CD4-positive, alpha-beta memory T cell (primary cell): ENCODE measurements at regions of chr19 and their contacts with region 1.

Region 1: GRCh38 chr19:48391107-48391986 is at the start of gene KDELR1:
- DNase-seq: peak; percentile 59 to 79 (median 66)
- H3K4me3 ChIP-seq: peak within 1 kb of the TSS; percentile 63 to 89
- H3K4me3 Mint-ChIP-seq: peak within 1 kb of the TSS; percentile 91 to 95 (median 94)
- H3K27ac ChIP-seq: peak within 1 kb of the TSS; percentile 93
- H3K27ac Mint-ChIP-seq: peak within 1 kb of the TSS; percentile 89 to 98 (median 95)
- H3K4me1 ChIP-seq: peaks cover 41% of the 10 kb centered on the region
- H3K4me1 Mint-ChIP-seq: peaks cover 15 to 49% (median 33%) of the 10 kb centered on the region in 4 donors
- H3K27me3 ChIP-seq: peaks cover 19% of the 10 kb centered on the region
- H3K27me3 Mint-ChIP-seq: peaks cover 6 to 19% of the 10 kb centered on the region in 2 donors
- total RNA-seq, gene KDELR1: 58.8 to 63.2 TPM

Region 2: GRCh38 chr19:48403606-48404005 is 12.3 kb after region 1 on chr19:
- CTCF ChIA-PET with region 1: interaction called, 28 read pairs
- POLR2A ChIA-PET with region 1: interaction called, 9 read pairs
- intact Hi-C with region 1: no loop called
- DNase-seq: peak; percentile 32 to 65 (median 47)
- H3K4me3 ChIP-seq: no peak overlapping the region
- H3K4me3 Mint-ChIP-seq: no peak overlapping the region
- H3K27ac ChIP-seq: no peak overlapping the region
- H3K27ac Mint-ChIP-seq: peak overlapping the region in 2 of 7 donors; percentile 24 to 62
- H3K4me1 ChIP-seq: no peaks in the 10 kb centered on the region
- H3K4me1 Mint-ChIP-seq: peaks cover 8 to 31% (median 16%) of the 10 kb centered on the region in 4 donors
- H3K27me3 ChIP-seq: no peaks in the 10 kb centered on the region
- H3K27me3 Mint-ChIP-seq: peaks cover 2 to 7% of the 10 kb centered on the region in 2 donors

Region 3: DNA sequence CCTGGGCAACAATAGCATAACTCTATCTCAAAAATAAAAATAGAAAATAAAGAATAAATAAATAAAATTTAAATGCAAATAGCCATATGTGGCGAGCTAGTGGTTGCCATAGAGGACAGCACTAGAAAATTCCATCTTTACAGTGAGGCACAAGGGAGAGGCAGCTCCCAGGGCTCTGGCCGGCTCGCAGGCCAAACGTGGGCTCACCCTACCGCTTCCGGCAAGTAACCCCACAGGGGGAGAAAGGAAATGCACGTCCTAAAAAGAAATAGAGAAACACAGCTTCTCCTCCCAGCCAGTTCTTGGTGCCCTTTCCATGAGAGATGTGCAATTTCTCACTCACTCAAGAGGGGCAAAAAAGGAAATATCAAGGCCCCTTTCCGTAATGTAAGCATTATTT is 42.0 kb after region 1 on chr19:
- CTCF ChIA-PET with region 1: no interaction called
- POLR2A ChIA-PET with region 1: no interaction called
- intact Hi-C with region 1: no loop called
- DNase-seq: no peak
- H3K4me3 ChIP-seq: no peak overlapping the region
- H3K4me3 Mint-ChIP-seq: no peak overlapping the region
- H3K27ac ChIP-seq: no peak overlapping the region
- H3K27ac Mint-ChIP-seq: no peak overlapping the region
- H3K4me1 ChIP-seq: no peaks in the 10 kb centered on the region
- H3K4me1 Mint-ChIP-seq: no peaks in the 10 kb centered on the region
- H3K27me3 ChIP-seq: no peaks in the 10 kb centered on the region
- H3K27me3 Mint-ChIP-seq: peaks cover 16 to 17% of the 10 kb centered on the region in 2 donors

Region 4: GRCh38 chr19:48520134-48520533 is 128.8 kb after region 1 on chr19:
- CTCF ChIA-PET with region 1: no interaction called
- POLR2A ChIA-PET with region 1: no interaction called
- intact Hi-C with region 1: no loop called
- DNase-seq: no peak
- H3K4me3 ChIP-seq: no peak overlapping the region
- H3K4me3 Mint-ChIP-seq: no peak overlapping the region
- H3K27ac ChIP-seq: no peak overlapping the region
- H3K27ac Mint-ChIP-seq: no peak overlapping the region
- H3K4me1 ChIP-seq: no peaks in the 10 kb centered on the region
- H3K4me1 Mint-ChIP-seq: no peaks in the 10 kb centered on the region
- H3K27me3 ChIP-seq: no peaks in the 10 kb centered on the region
- H3K27me3 Mint-ChIP-seq: peaks cover 7 to 9% of the 10 kb centered on the region in 2 donors